ENCODE measurements at regions of chr12 and their contacts with region 1.

Region 1: DNA sequence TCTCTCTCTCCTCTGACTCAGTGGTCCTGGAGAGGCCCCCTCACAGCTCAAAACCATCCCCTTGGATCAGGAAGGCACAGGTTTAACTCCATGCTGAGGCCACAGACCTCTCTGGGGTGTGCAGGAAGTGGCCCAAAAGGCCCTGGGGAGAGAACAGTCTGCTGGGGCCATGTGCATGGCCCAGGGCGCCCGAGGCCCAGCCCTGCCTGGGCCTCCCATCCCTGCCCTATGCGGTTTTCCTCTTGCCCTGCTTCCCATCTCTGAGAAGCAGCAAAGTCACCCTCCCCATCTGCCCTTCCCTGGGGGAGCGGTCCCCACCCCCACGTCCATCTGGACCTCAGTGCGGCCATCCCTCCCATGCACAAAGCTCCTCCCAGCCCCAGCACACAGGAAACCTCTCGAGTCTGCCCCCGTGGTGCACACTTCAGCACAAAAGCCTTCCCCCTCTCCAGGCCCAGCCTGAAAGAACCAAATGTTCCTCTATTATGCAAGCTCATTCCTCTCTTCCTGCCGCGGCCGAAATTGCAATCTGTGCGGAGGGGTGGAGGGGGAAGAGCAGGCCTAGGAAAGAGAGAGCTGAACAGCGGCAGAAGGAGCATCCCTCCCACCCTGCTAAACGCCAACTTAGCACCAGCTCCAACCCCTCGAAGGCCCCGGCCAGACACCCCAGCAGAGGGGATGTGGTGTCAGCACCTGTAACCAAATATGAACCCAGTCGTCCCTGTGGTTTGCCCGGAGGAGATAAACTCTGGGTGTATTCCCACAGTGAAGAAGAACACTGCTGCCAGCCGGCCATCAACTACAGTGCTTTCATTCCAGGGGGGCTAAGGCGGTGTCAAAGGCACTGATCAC is 108.5 kb downstream of the SCARB1 start:
- DNase-seq: peak; percentile 77 to 95 (median 91)
- H3K4me3 ChIP-seq: peak overlapping the region in 5 of 59 donors; percentile 2 to 10 (median 10)
- H3K27ac ChIP-seq: peak overlapping the region; percentile 73 to 99 (median 96)
- H3K27me3 ChIP-seq: no peaks in the 10 kb centered on the region
- CTCF ChIP-seq: peak in 13 of 56 donors; percentile 5 to 35 (median 25)

Region 2: DNA sequence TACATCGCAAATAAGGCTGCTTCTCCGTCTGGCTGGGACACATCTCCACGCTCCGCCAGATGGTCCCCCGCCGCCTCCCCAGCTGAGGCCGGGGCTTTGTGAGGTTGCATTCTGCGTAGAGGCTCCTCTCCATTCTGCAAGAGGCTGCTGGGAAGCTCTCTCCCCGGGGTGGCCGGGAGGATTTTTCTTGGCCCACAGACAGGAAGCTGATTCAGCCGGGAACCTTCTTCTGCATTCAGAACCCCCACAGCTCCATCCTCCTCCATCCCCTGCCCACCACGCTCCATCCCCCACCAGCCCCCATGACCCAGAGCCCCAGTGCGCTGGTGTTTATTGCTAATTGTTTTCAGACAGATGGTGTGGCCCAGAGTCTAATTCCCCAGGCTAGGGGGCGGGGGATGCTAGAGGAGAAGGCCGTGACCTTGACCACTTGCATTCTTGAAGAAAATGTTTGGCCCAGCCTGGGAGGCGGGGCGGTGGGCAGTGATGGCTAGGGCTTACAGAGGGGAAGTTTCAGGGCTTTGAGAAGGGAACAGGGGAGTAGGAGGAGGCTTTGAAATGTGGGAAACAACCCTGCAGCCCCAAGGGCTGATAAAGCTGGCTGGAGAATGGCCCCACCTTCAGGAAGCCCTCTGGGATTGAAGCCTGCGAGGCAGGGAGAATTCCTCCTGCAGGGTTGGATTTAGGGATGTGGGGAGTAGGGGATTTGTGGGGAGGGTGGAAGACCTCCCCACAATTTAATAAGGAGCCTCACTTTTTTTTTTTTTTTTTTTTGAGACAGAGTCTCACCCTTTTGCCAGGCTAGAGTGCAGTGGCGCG is 99.3 kb before region 1 on chr12:
- intact Hi-C with region 1: loop called in 1 of 2 experiments (anchors 5 kb)
- DNase-seq: peak; percentile 63 to 90 (median 84)
- H3K4me3 ChIP-seq: peak overlapping the region in 51 of 59 donors; percentile 4 to 55 (median 36)
- H3K27ac ChIP-seq: peak overlapping the region; percentile 21 to 96 (median 91)
- H3K27me3 ChIP-seq: no peaks in the 10 kb centered on the region
- CTCF ChIP-seq: peak in 1 of 56 donors; percentile 5

Region 3: GRCh38 chr12:124680863-124681778 is 74.1 kb before region 1 on chr12:
- intact Hi-C with region 1: loop called in 1 of 2 experiments (anchors 5 kb)
- DNase-seq: peak in 1 of 10 donors; percentile 30
- H3K4me3 ChIP-seq: no peak overlapping the region
- H3K27ac ChIP-seq: peak overlapping the region in 18 of 59 donors; percentile 4 to 71 (median 42)
- H3K27me3 ChIP-seq: no peaks in the 10 kb centered on the region
- CTCF ChIP-seq: peak in 29 of 56 donors; percentile 12 to 45 (median 24)

Region 4: DNA sequence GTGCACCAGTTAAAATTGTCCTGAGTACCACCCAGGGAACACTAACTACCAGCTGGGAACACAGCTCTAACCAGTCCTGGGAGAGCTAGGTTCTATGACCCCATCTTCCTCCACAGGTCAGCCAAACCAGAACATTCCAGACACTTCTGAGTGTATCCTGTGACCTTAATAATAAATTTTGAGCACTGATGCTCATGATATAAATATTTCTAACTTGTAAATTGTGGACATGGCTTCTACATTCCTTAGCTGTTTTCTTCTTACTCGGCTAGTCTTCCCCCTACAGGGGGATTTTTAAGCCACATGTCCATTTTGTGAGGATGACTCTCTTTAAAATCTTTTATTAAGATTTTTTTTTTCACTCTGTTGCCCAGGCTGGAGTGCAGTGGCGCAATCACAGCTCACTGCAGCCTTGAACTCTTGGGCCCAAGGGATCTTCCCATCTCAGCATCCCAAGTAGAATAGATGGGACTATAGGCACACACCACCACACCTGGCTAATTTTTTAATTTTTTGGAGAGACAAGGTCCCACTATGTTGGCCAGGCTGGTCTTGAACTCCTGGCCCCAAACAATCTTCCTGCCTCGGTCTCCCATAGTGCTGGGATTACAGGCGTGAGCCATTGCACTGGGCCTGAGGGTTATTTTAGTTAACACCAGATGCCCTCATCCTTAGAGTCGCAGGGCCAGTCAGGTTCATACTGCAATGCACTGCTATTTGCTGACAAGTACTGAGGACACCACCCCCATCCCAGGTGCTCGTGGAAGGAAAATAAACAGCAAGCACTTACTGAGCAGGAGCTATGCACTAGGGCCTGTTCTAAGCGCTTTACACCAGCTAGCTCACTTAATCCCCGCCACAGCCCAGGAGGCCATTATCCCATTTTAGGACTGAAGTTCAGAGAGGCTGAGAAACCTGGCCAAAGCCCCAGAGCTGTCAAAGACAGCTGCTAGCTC is 45.2 kb before region 1 on chr12:
- intact Hi-C with region 1: no loop called
- DNase-seq: no peak
- H3K4me3 ChIP-seq: no peak overlapping the region
- H3K27ac ChIP-seq: no peak overlapping the region
- H3K27me3 ChIP-seq: no peaks in the 10 kb centered on the region
- CTCF ChIP-seq: no peak